ENCODE measurements at regions of chr3 and their contacts with region 1.

Region 1: GRCh38 chr3:152646004-152646403 is 188.9 kb upstream of the P2RY1 start:
- DNase-seq: no peak
- H3K4me3 ChIP-seq: no peak overlapping the region
- H3K27ac ChIP-seq: no peak overlapping the region
- H3K27me3 ChIP-seq: no peaks in the 10 kb centered on the region
- CTCF ChIP-seq: no peak

Region 2: DNA sequence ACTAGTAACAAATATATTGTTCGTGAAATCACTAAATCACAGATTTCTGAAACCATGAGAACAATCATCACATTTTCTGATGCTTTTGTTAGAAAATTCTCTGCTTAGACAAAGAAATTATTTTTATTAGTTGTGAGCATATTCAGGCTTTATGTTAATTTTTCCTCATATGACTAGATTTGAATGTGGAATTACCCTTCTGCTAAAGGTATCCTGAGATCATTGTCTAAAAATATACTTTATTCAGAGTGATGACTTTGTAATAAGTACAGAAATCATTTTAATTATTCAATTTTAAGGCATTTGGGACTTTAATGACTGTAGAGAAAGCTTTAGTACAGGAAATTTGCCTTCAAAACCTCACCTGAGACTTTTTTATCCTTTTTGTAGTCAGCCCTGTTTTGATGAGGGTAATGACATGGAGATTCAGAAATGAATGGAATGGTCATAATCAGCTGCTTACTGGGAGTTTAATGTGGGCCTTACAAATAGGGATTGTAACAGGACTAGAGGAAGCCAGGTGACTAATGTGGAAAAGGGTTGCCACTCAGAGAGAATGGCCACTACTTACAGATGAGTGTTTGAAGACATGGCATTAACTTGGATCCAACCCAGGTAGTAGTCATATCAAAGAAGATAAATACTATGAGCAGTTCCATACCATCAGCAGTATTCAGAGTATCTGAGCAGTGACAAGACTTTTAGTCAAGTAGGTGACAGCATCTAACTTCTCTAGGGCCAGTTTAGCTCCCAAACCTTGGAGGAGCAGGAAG is 229.0 kb before region 1 on chr3:
- intact Hi-C with region 1: no loop called
- DNase-seq: no peak
- H3K4me3 ChIP-seq: no peak overlapping the region
- H3K27ac ChIP-seq: no peak overlapping the region
- H3K27me3 ChIP-seq: no peaks in the 10 kb centered on the region
- CTCF ChIP-seq: no peak

Region 3: DNA sequence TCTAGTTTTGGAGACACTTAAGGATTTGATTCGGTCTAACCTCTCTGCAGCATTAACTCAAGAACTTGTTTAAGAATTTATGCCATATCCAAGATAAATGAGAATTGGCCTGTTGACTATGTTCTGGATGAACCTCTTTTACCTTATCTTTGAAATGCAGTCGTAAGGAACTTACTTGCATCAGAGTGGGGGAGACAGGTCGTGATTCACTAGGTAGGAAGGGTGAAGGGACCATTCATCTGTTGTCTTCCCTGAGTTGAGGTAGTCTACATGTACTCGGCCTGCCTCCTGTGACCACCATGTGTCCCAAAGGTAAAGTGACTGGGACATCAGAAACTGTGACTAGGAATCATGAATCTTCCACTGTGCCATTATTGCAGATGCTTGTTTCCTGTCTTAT is 59.0 kb before region 1 on chr3:
- intact Hi-C with region 1: no loop called
- DNase-seq: no peak
- H3K4me3 ChIP-seq: no peak overlapping the region
- H3K27ac ChIP-seq: no peak overlapping the region
- H3K27me3 ChIP-seq: no peaks in the 10 kb centered on the region
- CTCF ChIP-seq: no peak

Region 4: DNA sequence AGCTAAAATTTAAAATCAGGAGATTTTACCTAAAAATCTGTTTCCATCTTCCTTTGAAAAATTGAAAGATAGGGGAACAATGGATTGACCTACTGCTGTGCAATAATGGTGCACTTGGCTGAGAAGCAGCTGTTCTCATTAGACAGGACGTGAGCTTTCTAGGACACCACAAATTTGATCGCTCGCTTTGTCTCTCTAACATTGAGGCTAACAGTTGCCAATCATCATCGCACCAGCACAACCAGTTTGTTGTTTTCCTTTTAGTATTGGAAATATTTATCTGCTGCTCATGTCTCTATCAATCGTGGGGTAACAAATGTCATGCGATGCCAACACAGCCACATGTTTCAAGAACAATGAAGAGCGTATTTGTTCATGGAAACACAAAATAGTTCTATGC is 39.9 kb before region 1 on chr3:
- intact Hi-C with region 1: loop called in 1 of 2 experiments (anchors 5 kb)
- DNase-seq: no peak
- H3K4me3 ChIP-seq: peak overlapping the region in 1 of 59 donors; percentile 17
- H3K27ac ChIP-seq: peak overlapping the region in 4 of 59 donors; percentile 10 to 39 (median 20)
- H3K27me3 ChIP-seq: no peaks in the 10 kb centered on the region
- CTCF ChIP-seq: no peak

Region 5: DNA sequence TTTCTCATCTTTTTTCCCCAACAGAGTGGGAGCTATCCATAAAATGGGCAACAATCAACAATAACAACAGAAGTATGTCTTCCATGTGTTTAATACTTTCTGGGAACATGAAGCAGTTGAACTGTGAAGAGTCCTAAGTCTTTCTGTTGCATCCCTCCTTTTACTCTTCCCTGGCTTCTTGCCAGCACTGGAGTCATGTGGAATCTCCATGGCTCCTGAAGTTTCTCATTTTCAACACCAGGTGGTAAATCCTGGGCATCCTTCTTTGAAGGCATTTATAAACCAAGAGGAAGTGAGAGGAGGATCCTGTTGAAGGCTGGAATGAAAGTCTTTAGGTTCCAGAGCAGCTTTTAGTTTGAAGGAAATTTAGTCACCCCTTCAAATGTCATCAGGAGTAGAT is 148.7 kb after region 1 on chr3:
- intact Hi-C with region 1: no loop called
- DNase-seq: no peak
- H3K4me3 ChIP-seq: no peak overlapping the region
- H3K27ac ChIP-seq: no peak overlapping the region
- H3K27me3 ChIP-seq: no peaks in the 10 kb centered on the region
- CTCF ChIP-seq: no peak